Right ventricle myocardium inferior (tissue), 1 donor: ENCODE measurements at regions of chr7 and their contacts with region 1.

Region 1: GRCh38 chr7:130010689-130011412 is 40.3 kb downstream of the ZC3HC1 start:
- DNase-seq: no peak
- ATAC-seq: peak; percentile 58

Region 2: GRCh38 chr7:129367700-129368388 is 643.0 kb before region 1 on chr7:
- intact Hi-C with region 1: loop called (anchors 10 kb)
- DNase-seq: peak; percentile 86
- ATAC-seq: peak; percentile 84

Region 3: GRCh38 chr7:129657363-129657762 is 353.5 kb before region 1 on chr7:
- intact Hi-C with region 1: loop called (anchors 5 kb)
- DNase-seq: no peak
- ATAC-seq: no peak

Region 4: DNA sequence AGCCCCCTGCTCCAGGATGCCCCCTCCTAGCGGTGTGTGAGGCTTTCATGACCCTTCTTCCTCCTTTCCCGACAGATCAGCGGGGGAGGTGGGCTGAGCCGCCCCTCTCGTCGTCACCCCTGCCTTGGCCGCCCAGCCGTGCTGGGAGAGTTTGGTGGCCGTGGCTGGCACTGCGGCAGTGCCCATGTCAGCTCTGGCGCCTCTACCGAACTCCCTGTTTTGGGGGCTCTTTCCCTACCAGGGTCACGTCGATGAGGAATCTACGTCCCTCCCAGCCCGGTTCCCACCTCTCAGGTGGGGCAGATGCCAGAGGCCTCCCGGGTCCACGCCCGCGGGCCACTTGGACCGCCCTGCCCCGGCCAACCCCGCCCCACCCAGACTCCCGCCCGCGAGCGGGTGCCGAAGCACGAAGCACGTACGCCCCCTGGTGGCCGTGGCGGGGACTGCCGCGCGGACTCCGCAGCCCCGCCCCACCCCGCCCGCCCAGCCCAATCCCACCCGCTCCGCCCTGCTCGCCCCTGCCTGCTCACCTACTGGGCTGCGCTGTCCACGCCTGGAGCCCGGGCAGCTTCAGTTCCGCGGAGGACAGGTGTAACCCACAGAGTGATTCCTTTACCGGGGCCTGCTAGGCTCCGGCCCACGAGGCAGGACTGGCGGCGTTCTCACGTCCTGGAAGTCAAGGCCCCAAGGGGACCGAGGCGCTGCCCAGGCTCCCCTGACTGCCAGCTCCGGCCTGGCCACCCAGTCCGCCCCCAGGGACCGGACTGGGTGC is 185.2 kb before region 1 on chr7:
- intact Hi-C with region 1: loop called (anchors 2 kb)
- DNase-seq: peak; percentile 96
- ATAC-seq: peak; percentile 89

Region 5: DNA sequence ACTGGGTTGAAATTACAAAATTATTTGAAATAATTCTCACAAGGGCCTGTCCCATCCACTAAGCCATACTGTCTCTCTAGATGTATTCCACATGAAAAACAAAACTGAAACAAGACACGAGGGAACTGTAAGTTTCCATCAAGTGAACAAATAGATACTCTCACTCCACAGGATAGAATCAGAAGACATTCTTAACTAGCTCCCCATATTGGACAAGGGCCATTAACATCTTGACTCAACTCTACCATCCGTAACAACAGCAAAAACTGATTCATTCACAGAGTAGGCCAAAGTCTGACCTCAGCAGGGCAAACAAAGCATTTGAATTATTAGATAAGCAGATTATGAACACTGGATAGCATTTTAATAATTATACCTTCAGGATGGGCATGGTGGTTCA is 87.1 kb before region 1 on chr7:
- intact Hi-C with region 1: no loop called
- DNase-seq: no peak
- ATAC-seq: no peak

Region 6: DNA sequence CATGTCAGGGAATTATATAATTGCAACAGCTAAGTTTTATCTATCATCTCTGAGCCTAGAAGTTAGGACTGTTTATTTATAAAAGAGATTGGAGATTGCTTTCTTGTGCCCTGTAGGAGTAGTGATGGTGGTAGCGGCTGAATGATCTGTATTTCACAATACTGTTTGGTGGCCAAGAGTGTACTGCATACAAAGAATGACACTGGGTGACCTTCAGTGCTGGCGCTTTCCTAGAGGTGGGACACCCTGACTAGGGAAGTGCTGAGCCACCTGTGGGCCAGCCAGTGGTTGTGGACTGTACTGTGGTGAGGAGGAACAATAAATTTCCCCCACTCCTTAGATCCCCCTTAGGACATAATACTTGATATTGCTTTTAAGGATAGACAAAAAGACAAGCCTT is 604.7 kb after region 1 on chr7:
- intact Hi-C with region 1: no loop called
- DNase-seq: no peak
- ATAC-seq: peak; percentile 89